ENCODE measurements at regions of chr1 and their contacts with region 1.

Region 1: DNA sequence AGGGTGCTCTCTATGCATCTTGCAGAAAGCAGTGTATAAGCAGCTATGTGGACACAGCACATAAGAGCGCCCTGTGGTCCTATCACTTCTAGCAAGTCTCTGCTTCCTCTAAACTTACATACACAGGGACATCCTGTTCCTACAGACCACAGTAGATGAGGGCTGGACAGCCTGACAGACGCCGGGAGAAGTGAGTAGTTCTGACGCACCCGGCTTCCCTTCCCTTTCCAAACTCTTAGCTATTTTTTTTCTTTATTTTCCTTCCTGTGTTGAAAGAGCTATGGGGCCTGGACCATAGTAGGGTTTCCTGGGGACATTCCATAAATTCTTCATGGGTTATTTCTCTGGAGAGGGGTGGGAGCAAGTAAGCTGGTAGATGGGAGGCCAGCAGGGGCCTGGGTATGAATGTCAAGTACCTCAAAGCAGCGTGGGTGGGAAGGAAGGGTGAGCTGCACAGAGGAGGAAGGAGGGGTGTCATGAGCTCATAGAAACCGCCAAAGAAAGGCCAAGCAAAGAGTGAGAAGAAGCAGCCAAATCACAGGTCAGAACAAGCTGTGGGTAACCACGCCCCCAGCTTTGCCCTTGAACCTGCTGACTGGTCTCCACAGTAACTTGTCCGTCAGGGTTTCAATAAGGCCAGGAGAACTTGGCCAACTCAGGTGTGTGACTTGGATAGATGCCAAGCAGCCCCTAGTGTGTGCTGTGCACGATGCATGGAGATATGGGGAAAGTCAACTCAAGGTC is 36.6 kb downstream of the PLXNA2 start:
- DNase-seq: peak; percentile 99
- H3K4me3 ChIP-seq: no peak overlapping the region
- H3K27ac ChIP-seq: peak overlapping the region; percentile 66
- H3K4me1 ChIP-seq: peaks cover 69% of the 10 kb centered on the region
- H3K27me3 ChIP-seq: no peaks in the 10 kb centered on the region
- CTCF ChIP-seq: no peak

Region 2: DNA sequence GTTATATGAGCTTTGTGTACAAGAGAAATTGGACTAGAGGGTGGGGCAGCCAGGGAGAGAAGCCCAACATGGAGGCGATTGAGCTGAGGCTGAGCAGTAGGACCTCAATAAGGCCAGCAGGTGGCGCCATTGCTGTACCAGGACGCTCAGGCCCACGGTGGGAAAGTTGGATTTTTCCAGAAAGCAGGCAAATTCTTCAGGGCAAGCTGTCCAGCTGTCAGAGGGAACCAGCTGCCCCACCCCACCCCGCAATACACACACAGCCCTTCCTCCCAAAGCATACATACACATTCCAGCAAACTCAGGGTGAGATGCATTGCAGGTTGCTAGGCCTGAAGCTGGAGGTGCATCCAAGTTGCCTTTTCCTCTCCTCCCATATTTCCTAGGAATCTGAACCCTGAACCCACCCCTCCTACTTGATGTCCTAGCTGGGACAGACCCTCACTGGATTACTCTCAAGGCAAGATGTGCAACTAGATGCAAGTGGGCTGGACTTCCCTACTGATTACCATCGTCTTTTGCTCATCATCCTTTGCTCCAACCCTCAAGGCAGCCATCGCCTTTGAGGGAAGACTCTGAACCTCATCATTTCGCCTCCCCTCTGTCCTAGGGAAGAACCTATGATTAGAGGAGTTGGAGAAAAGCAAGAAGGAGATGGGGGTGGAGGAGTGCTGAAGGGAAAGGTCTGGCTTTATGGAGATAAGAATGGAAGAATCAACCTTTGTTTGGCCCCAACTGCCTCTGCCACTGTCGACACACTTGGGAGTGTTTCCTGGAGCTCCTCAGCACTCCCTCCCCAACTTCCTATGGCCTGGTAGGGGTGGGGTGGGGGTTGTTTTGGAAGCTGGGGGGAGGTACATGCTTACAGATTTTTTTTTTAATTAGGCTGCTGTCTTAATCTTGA is 322.2 kb before region 1 on chr1:
- CTCF ChIA-PET with region 1: no interaction called
- dilution Hi-C with region 1: no loop called
- in situ Hi-C with region 1: no loop called
- intact Hi-C with region 1: no loop called
- DNase-seq: peak; percentile 46
- H3K4me3 ChIP-seq: no peak overlapping the region
- H3K27ac ChIP-seq: no peak overlapping the region
- H3K4me1 ChIP-seq: peaks cover 15% of the 10 kb centered on the region
- H3K27me3 ChIP-seq: no peaks in the 10 kb centered on the region
- CTCF ChIP-seq: peak; percentile 93 to 94

Region 3: DNA sequence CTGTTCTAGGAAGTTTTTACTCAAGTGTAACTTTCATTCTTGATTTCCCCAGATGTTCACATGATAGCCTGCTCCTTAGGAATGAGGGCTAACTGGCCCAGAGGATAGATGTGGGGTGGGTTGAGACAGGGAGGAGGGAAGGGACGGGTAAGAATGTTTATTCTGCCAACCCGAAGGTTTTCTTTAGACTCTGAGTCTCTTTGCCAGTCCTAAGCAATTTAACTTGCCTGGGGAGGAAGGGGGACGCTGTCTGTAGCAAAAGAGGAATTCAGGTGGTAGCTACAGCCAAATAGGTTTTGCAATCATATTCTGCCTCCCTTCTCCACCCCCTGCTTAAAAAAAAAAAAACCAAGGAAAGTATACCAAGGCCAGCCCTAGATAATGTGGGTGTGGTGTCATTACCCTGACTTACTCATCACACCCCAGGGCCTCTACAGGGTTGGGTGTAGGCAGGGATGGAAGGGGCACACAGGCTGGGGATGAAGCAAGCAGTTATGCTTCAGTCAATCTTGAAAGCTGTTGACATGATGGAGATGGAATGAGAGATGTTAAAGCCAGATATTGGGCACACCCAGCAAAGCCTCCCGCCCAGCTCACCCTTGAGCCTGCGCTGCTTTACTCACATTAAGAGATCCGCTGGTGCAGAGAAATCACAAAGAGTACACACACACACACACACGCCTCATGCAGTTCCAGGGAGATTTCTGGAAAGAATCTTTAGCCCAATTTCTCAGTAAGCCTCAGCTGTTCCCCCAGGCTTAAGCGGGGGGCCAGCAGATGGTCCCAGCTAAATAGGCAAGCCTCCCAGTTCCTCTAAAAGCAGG is 23.3 kb before region 1 on chr1:
- CTCF ChIA-PET with region 1: no interaction called
- dilution Hi-C with region 1: no loop called
- in situ Hi-C with region 1: no loop called
- intact Hi-C with region 1: loop called (anchors 1 kb)
- DNase-seq: peak; percentile 99
- H3K4me3 ChIP-seq: no peak overlapping the region
- H3K27ac ChIP-seq: peak overlapping the region; percentile 57
- H3K4me1 ChIP-seq: peaks cover 37% of the 10 kb centered on the region
- H3K27me3 ChIP-seq: no peaks in the 10 kb centered on the region
- CTCF ChIP-seq: no peak

Region 4: DNA sequence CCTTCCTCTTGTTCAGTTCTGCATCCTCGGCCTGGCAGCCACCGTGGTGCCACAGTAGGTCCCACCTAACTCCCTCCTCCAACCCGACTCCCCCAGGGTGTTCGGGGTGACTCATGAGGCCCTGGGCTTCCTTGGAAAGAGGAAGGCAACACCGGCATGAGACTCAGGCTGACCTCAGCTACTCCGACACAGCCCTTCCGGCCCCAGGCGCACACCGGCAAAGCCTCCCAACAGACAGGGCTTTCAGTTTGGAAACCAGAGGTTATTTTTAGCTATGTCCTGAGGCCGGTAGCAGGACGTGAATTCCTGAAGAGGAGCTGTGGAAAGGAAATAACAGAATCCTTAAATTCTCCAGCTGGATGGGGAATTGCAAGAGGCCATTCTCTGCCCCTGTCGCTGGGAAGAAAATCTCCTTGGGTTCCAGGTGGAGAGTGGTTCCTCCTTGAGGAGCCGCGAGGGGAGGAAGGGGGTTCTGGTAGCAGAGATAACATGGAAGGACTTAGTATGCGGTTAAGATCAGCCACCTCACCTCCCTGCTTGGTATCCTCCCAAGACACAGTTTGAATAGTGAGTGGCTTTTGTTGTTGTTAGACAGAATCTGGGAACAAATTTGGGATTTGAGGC is 12.2 kb after region 1 on chr1:
- CTCF ChIA-PET with region 1: interaction called, 8 read pairs
- dilution Hi-C with region 1: no loop called
- in situ Hi-C with region 1: no loop called
- intact Hi-C with region 1: loop called (anchors 1 kb)
- DNase-seq: peak; percentile 92
- H3K4me3 ChIP-seq: peak overlapping the region in 1 of 3 experiments; percentile 14
- H3K27ac ChIP-seq: peak overlapping the region; percentile 82
- H3K4me1 ChIP-seq: peaks cover 66% of the 10 kb centered on the region
- H3K27me3 ChIP-seq: no peaks in the 10 kb centered on the region
- CTCF ChIP-seq: no peak

Region 5: GRCh38 chr1:208279826-208280588 is 72.4 kb after region 1 on chr1:
- CTCF ChIA-PET with region 1: no interaction called
- dilution Hi-C with region 1: no loop called
- in situ Hi-C with region 1: no loop called
- intact Hi-C with region 1: no loop called
- DNase-seq: no peak
- H3K4me3 ChIP-seq: no peak overlapping the region
- H3K27ac ChIP-seq: no peak overlapping the region
- H3K4me1 ChIP-seq: no peaks in the 10 kb centered on the region
- H3K27me3 ChIP-seq: peaks cover 10% of the 10 kb centered on the region
- CTCF ChIP-seq: no peak

Measured in mammary epithelial cell (primary cell).